ENCODE measurements at regions of chr7 and their contacts with region 1.

Region 1: GRCh38 chr7:117127585-117128168 is 174.4 kb downstream of the ST7 start:
- DNase-seq: no peak
- H3K4me3 ChIP-seq: no peak overlapping the region
- H3K27ac ChIP-seq: no peak overlapping the region
- H3K4me1 ChIP-seq: peaks cover 0 to 5% (median 3%) of the 10 kb centered on the region in 4 experiments; a peak in 4 of 7 replicates
- H3K27me3 ChIP-seq: no peaks in the 10 kb centered on the region
- CTCF ChIP-seq: peak in 2 of 3 experiments; percentile 37 to 62; a peak in 2 of 4 replicates
- EP300 ChIP-seq: no peak
- POLR2A ChIP-seq: no peak
- RAD21 ChIP-seq: peak; percentile 43 to 45

Region 2: GRCh38 chr7:117008883-117009531 is 118.7 kb before region 1 on chr7:
- CTCF ChIA-PET with region 1: interaction called, 10 read pairs
- POLR2A ChIA-PET with region 1: no interaction called
- DNase-seq: no peak
- H3K4me3 ChIP-seq: no peak overlapping the region
- H3K27ac ChIP-seq: no peak overlapping the region
- H3K4me1 ChIP-seq: no peaks in the 10 kb centered on the region
- H3K27me3 ChIP-seq: no peaks in the 10 kb centered on the region
- CTCF ChIP-seq: no peak
- EP300 ChIP-seq: no peak
- POLR2A ChIP-seq: no peak
- RAD21 ChIP-seq: no peak

Region 3: DNA sequence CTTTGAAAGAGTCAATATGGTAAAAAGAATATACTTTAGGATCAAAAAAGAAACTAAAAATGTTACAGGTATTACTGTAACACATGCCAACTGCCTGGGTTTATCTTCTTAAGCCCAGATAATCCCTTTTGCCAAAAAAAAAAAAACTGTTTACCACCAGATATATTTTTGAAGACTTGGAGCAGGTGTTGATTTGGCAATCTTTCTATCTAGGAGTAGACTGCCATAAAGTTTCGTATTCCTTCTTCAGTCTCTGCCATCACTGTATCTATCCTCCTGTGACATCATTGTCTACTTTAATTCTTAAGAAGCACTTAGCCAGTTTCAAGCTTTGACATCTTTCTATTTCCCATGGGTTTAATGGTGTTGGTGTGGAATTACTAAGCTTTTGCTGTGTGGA is 13.4 kb before region 1 on chr7:
- CTCF ChIA-PET with region 1: interaction called, 11 read pairs
- POLR2A ChIA-PET with region 1: no interaction called
- DNase-seq: no peak
- H3K4me3 ChIP-seq: no peak overlapping the region
- H3K27ac ChIP-seq: no peak overlapping the region
- H3K4me1 ChIP-seq: peaks cover 2 to 14% (median 7%) of the 10 kb centered on the region in 4 experiments; a peak in 5 of 7 replicates
- H3K27me3 ChIP-seq: no peaks in the 10 kb centered on the region
- CTCF ChIP-seq: no peak
- EP300 ChIP-seq: no peak
- POLR2A ChIP-seq: no peak
- RAD21 ChIP-seq: no peak